ENCODE measurements at regions of chr6 and their contacts with region 1.

Region 1: DNA sequence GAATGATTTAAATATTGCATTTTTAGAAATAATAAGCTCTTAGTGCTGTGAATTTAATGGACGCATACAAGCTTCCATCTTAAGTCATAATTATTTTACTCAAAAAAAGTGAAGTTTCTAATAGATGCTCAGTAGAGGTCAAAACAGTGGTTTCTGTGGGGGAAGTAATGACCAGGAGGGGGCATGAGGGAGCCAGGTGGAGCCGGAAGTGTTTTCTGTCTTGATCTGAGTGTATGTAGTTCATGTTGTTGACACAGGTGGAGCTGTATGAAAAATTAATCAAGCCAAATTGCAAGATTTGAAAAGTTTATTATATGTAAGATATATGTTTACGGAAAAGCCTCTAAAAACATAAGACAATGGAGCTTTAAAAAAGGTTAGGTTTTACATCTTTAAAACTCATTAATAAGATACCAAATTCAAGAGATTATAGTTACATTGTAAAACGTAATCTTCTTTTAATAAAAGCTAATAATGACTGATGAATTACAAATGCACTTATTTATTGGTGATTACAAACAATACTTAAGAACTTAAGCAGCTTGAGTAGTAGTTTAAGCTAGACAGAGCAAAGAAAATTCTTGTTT is 68.0 kb downstream of the PLAGL1 start:
- DNase-seq: peak; percentile 75
- ATAC-seq: peak; percentile 96
- H3K4me3 Mint-ChIP-seq: no peak overlapping the region
- H3K27ac Mint-ChIP-seq: no peak overlapping the region
- H3K4me1 Mint-ChIP-seq: peaks cover 10% of the 10 kb centered on the region
- H3K27me3 Mint-ChIP-seq: no peaks in the 10 kb centered on the region
- CTCF ChIP-seq: peak; percentile 92

Region 2: DNA sequence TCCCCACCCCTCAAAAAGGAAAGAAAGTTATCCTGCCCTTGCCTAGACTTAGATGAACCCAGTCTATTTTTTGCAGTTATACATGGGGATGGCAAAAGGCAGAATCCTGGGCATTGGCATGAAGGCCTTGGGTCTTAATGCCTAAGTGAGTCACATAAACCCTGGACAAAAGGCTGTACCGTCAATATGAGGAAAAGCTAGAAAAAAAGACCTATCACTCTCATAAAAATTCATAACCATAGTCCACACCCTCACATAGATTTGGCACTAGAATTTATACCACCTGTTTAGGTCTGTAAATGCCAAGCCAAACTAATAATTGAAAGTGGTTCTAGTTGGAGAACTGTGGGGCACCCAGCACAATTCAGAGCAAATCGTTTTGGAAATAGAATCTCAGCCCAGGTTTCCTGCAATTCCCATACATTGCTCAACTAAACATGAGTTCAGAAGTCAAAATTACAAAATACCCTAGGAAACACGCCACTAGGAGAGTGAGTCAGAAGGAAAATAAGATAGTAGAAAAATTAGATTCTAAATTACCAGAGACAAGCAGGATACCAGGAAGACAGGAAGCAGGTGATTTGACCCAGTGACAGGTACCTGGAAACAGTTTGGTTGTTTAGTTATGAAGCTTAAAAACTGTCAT is 358.1 kb before region 1 on chr6:
- CTCF ChIA-PET with region 1: interaction called, 41 read pairs
- POLR2A ChIA-PET with region 1: no interaction called
- intact Hi-C with region 1: loop called (anchors 10 kb)
- DNase-seq: no peak
- ATAC-seq: no peak
- H3K4me3 Mint-ChIP-seq: no peak overlapping the region
- H3K27ac Mint-ChIP-seq: no peak overlapping the region
- H3K4me1 Mint-ChIP-seq: peaks cover 5% of the 10 kb centered on the region
- H3K27me3 Mint-ChIP-seq: no peaks in the 10 kb centered on the region
- CTCF ChIP-seq: no peak

Region 3: GRCh38 chr6:143961886-143962873 is 22.1 kb after region 1 on chr6:
- CTCF ChIA-PET with region 1: interaction called, 25 read pairs
- POLR2A ChIA-PET with region 1: no interaction called
- intact Hi-C with region 1: no loop called
- DNase-seq: no peak
- ATAC-seq: no peak
- H3K4me3 Mint-ChIP-seq: no peak overlapping the region
- H3K27ac Mint-ChIP-seq: no peak overlapping the region
- H3K4me1 Mint-ChIP-seq: no peaks in the 10 kb centered on the region
- H3K27me3 Mint-ChIP-seq: no peaks in the 10 kb centered on the region
- CTCF ChIP-seq: no peak

Region 4: GRCh38 chr6:144013486-144013909 is 73.4 kb after region 1 on chr6:
- CTCF ChIA-PET with region 1: interaction called, 173 read pairs
- POLR2A ChIA-PET with region 1: no interaction called
- intact Hi-C with region 1: loop called (anchors 5 kb)
- DNase-seq: peak; percentile 81
- ATAC-seq: peak; percentile 37
- H3K4me3 Mint-ChIP-seq: no peak overlapping the region
- H3K27ac Mint-ChIP-seq: no peak overlapping the region
- H3K4me1 Mint-ChIP-seq: peaks cover 4% of the 10 kb centered on the region
- H3K27me3 Mint-ChIP-seq: peaks cover 4% of the 10 kb centered on the region
- CTCF ChIP-seq: peak; percentile 96

Region 5: DNA sequence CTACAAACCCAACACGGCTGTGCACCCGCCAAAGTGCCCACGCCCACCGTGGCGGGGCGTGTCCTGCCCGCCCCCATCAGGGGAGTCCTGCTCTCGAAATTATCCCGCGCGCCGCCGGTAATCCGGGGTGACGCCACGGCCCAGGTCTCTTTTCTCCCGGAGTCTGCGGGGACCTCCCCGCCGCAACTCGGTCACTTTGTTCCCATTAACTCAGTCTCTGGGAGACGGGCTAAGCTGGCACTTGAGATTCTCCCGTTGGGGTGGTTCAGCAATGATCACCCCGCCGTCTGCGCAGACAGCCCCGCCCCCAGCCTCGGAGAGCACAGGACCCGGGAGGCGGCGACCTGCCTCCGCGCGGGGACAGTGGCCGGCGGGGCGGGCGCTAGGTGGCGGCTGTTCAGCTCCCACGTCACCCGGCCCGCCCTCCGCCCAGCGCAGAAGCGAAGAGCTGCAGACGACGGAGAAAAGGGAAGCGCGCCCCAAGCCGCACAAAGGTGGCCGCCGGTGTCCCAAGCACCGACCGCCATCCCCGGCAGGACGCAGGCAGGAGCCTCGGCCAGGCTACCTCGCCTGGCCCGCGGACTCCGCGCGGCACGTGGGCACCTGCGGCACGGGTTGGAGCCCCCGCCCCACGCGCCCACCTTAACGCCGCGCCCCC is 123.8 kb after region 1 on chr6:
- CTCF ChIA-PET with region 1: interaction called, 12 read pairs
- POLR2A ChIA-PET with region 1: no interaction called
- intact Hi-C with region 1: no loop called
- DNase-seq: peak; percentile 93
- ATAC-seq: peak; percentile 92
- H3K4me3 Mint-ChIP-seq: peak overlapping the region; percentile 84
- H3K27ac Mint-ChIP-seq: peak overlapping the region; percentile 87
- H3K4me1 Mint-ChIP-seq: peaks cover 40% of the 10 kb centered on the region
- H3K27me3 Mint-ChIP-seq: no peaks in the 10 kb centered on the region
- CTCF ChIP-seq: no peak

Region 6: DNA sequence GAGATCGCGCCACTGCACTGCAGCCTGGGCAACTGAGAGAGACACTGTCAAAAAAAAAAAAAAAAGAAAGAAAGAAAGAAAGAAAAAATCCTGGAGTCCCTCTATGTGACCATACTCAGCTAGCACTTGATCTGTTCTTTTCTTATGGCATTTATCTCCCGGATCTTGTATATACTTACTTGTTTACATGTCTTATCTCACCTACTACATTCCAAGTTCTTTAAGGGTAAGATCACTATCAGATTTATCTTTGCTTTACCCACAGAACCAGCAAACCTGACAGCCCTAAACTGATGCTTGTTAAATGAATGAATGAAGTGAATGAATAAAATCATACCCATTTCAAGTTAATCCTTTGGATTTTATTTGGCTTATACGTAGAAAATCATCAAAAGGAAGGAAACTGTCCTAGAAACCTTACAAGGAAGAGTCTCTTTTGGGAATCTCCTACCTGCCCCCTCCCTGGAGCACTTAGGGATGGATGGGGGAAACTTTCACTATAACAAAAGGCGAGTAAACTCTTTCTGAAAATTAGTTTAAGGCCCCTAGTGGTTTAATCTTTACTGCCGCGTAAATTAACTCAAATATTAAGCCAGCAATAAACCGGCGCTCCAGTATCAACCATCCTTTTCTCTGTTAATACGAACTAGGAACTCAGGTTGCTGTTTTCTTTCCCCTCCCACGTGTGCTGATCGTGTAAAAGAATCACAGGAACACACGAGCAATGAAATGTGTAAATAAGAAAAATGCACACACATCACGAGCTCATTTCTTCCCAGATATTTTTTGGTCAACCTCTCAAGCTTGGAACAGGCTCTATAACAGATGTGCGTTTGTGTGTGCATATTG is 343.7 kb after region 1 on chr6:
- CTCF ChIA-PET with region 1: no interaction called
- POLR2A ChIA-PET with region 1: no interaction called
- intact Hi-C with region 1: no loop called
- DNase-seq: no peak
- ATAC-seq: no peak
- H3K4me3 Mint-ChIP-seq: peak overlapping the region; percentile 78
- H3K27ac Mint-ChIP-seq: peak overlapping the region; percentile 26
- H3K4me1 Mint-ChIP-seq: peaks cover 11% of the 10 kb centered on the region
- H3K27me3 Mint-ChIP-seq: peaks cover 18% of the 10 kb centered on the region
- CTCF ChIP-seq: peak; percentile 33

Measured in activated CD8-positive, alpha-beta T cell treated with anti-CD3 and anti-CD28 coated beads for 36 hours (primary cell).